HEK293 (cell line): ENCODE measurements at regions of chr1 and their contacts with region 1.

Region 1: DNA sequence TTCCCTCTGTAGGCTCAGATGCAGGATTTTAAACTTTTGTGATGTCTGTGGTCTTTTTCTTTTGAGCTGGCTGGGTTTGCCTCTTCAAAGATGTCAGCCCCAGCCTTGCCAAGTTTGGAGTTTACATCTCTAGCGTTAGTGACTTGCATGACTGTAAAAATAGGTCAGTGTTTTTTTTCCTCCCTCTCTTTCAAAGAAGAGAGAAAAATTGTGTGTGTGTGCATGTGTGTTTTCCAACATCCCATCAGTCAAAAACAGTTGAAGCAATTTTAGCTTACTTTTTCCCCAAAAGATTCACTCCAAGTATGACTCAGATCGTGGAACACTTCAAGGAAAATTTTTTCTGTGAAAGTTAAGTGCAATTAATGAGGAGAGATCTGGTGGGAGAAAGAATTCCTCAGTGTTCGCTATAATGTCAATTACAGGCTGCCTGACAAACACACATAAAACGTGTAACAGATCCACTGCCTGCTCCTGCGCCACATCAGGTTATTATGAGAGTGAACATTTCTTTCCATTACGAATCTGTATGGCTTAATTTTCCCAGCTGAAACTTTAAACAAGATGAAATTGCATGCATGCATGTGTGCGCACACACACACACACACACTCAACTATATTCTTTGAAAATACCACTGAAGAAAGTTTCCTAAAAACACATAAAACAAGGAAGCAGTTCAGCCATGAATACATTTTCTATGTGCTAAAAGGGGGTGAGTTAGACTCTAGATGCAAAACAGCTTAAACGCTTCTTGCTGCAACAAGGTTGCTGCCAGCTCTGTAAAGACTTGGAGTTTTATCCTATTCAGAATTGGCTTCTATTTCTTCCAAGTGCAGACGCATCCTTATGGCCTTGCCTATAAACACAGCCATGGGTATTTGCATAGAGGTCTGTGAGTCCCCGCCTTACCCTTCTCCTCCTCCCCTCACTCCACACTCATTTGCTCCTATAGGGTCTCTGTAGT is 55.5 kb downstream of the TLR5 start:
- H3K4me3 ChIP-seq: no peak overlapping the region
- H3K27ac ChIP-seq: no peak overlapping the region
- H3K4me1 ChIP-seq: no peaks in the 10 kb centered on the region
- CTCF ChIP-seq: no peak

Region 2: GRCh38 chr1:222739465-222739864 is 348.1 kb before region 1 on chr1:
- CTCF ChIA-PET with region 1: interaction called, 18 read pairs
- POLR2A ChIA-PET with region 1: no interaction called
- H3K4me3 ChIP-seq: no peak overlapping the region
- H3K27ac ChIP-seq: no peak overlapping the region
- H3K4me1 ChIP-seq: no peaks in the 10 kb centered on the region
- CTCF ChIP-seq: no peak

Region 3: DNA sequence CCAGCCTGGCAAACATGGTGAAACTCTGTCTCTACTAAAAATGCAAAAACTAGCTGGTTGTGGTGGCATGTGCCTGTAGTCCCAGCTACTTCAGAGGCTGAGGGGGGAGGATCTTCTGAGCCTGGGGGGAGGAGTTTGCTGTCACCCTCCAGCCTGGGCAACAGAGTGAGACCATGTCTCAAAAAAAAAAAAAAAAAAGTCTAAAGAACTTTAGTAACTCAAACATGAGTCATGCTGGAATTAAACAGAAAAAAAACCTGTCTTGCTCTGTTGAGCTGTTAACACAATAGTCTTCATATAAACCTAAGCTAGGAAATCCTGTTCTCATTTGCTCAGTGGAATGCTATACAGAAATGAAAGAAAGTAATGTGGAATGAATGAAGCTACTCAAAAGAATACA is 289.5 kb before region 1 on chr1:
- CTCF ChIA-PET with region 1: interaction called, 22 read pairs
- POLR2A ChIA-PET with region 1: no interaction called
- H3K4me3 ChIP-seq: no peak overlapping the region
- H3K27ac ChIP-seq: no peak overlapping the region
- H3K4me1 ChIP-seq: no peaks in the 10 kb centered on the region; the same call in none of the 2 replicates
- CTCF ChIP-seq: no peak

Region 4: GRCh38 chr1:222892137-222892769 is 195.3 kb before region 1 on chr1:
- CTCF ChIA-PET with region 1: no interaction called
- POLR2A ChIA-PET with region 1: no interaction called
- H3K4me3 ChIP-seq: no peak overlapping the region
- H3K27ac ChIP-seq: no peak overlapping the region
- H3K4me1 ChIP-seq: peaks cover 10% of the 10 kb centered on the region; the same call in 1 of the 2 replicates
- CTCF ChIP-seq: no peak

Region 5: GRCh38 chr1:222994506-222995235 is 92.9 kb before region 1 on chr1:
- CTCF ChIA-PET with region 1: no interaction called
- POLR2A ChIA-PET with region 1: no interaction called
- H3K4me3 ChIP-seq: no peak overlapping the region
- H3K27ac ChIP-seq: no peak overlapping the region
- H3K4me1 ChIP-seq: 0 out of 2 replicates have a peak, but pooled peaks cover 7% of the 10 kb centered on the region
- CTCF ChIP-seq: no peak

Region 6: DNA sequence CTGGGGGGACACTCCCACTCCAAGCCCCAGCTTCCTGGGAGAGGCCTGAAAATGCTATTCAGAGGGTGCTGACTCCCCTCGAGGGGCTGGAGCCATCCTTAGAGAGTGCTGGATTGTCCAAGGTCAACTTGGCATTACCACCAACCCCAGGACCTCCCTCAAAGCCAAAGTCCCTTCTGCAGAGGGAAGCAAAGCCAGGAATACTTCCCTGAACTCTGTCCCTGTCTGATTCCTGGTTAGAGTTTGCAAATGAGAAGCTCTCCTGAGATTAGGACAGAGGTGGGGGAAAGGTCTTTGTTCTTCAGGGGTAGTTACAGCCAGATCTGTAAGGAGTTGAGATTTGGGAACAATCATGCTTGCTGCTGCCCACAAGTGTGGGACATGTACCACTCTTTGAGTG is 10.1 kb after region 1 on chr1:
- CTCF ChIA-PET with region 1: interaction called, 85 read pairs
- POLR2A ChIA-PET with region 1: interaction called, 8 read pairs
- H3K4me3 ChIP-seq: no peak overlapping the region
- H3K27ac ChIP-seq: no peak overlapping the region
- H3K4me1 ChIP-seq: peaks cover 2% of the 10 kb centered on the region
- CTCF ChIP-seq: no peak

Region 7: GRCh38 chr1:223109581-223110026 is 22.0 kb after region 1 on chr1:
- CTCF ChIA-PET with region 1: interaction called, 85 read pairs
- POLR2A ChIA-PET with region 1: no interaction called
- H3K4me3 ChIP-seq: no peak overlapping the region
- H3K27ac ChIP-seq: no peak overlapping the region
- H3K4me1 ChIP-seq: no peaks in the 10 kb centered on the region
- CTCF ChIP-seq: no peak

Region 8: DNA sequence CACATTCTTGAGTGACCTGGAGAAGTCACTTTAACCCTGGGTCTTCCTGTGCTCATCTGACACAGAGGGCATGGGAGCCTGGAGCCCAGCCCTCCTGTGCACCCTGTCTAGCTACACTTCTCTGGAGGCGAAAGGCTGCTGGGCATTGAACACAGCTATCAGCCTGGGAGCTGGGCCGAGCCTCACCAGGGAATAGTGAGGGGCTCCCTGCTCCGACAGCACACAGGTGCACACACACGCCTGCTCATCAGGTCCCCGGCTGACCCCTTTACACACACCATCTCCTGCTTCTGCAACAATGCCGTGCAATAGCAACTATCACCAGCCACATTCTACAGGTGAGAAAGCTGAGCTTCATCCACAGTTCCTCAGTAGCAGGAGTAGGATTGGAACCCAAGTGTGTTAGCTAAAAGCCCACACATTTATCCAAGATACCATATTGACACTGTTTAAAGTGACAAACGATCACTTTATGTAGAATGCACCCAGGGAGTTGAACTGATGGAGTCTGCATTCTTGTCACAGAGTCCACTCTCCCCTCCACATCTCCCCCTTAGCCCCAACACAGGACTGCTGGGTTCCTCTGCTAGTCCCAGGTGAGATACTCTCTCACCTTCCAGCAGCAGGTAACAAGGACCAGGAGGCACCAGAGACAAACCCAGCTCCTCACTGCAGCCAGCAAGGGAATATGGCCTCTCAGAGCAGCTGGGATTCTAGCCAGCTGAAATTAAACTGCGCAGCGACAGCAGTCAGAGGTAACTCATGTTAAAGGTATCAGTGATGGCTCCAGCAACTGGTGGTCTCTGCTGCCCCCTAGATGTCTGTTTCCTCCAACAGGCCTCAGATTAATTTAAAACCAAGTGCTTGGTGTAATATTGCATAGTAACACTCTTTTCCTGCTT is 596.3 kb after region 1 on chr1:
- CTCF ChIA-PET with region 1: interaction called, 13 read pairs
- POLR2A ChIA-PET with region 1: no interaction called
- H3K4me3 ChIP-seq: no peak overlapping the region
- H3K27ac ChIP-seq: no peak overlapping the region
- H3K4me1 ChIP-seq: no peaks in the 10 kb centered on the region
- CTCF ChIP-seq: peak; percentile 95